Endothelial cell of umbilical vein (primary cell): ENCODE measurements at regions of chr2 and their contacts with region 1.

Region 1: DNA sequence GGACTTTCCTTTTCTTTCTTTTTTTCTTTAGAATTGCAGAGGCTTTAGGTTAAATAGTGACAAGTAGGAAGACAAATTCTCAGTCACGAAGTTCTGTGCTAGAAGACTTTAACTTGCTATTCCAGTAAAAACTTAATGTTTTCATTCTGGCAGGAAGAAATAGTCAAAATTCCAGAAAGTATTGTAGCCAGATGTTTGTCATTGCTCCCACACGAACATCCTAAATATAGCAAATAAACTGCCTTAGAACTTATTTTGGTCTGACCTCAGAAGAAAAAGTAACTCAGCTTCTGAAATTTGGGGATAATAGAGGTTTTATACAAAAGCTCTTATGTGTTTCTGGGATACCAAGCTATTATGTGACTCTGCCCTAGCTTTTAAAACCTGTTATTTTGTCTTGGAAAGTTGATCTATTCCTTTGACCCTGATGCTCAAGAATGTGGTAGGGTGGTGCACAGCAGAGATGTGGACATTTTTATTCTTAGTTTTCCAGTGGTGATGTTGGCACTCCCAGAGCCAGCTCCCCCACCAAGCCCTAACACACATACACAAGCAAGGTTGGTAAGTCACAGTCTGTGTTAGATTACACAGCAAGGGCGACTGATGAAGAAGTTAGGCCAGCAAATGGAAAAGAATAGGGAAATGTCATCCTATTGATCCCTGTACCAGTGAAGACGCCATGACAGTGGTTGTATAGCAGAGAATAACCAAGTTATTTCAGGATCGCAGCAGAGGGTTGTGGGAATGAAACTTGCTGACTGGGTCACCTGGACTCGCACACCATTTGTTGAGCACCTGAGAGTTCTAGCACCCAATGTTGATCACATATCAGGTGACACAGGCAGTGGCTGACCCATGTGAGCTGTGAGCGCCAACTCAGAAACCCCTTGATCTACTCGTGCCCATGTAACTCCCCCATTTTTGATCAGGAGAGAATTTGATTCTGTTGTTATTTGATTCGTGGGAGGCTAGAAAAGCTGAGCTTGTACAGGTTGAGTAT is 23.7 kb downstream of the FARP2 start:
- DNase-seq: no peak
- H3K4me3 ChIP-seq: no peak overlapping the region
- H3K27ac ChIP-seq: no peak overlapping the region
- H3K4me1 ChIP-seq: peaks cover 9% of the 10 kb centered on the region
- H3K27me3 ChIP-seq: no peaks in the 10 kb centered on the region
- CTCF ChIP-seq: no peak
- POLR2A ChIP-seq: no peak

Region 2: GRCh38 chr2:240913810-240914644 is 465.8 kb before region 1 on chr2:
- CTCF ChIA-PET with region 1: no interaction called
- POLR2A ChIA-PET with region 1: no interaction called
- dilution Hi-C with region 1: no loop called
- intact Hi-C with region 1: no loop called
- DNase-seq: peak; percentile 78
- H3K4me3 ChIP-seq: no peak overlapping the region
- H3K27ac ChIP-seq: peak overlapping the region; percentile 24
- H3K4me1 ChIP-seq: peaks cover 15% of the 10 kb centered on the region
- H3K27me3 ChIP-seq: no peaks in the 10 kb centered on the region
- CTCF ChIP-seq: peak; percentile 95 to 96
- POLR2A ChIP-seq: no peak

Region 3: GRCh38 chr2:241211282-241211681 is 168.5 kb before region 1 on chr2:
- CTCF ChIA-PET with region 1: no interaction called
- POLR2A ChIA-PET with region 1: no interaction called
- dilution Hi-C with region 1: no loop called
- intact Hi-C with region 1: no loop called
- DNase-seq: no peak
- H3K4me3 ChIP-seq: no peak overlapping the region
- H3K27ac ChIP-seq: no peak overlapping the region
- H3K4me1 ChIP-seq: no peaks in the 10 kb centered on the region
- H3K27me3 ChIP-seq: no peaks in the 10 kb centered on the region
- CTCF ChIP-seq: no peak
- POLR2A ChIP-seq: no peak

Region 4: DNA sequence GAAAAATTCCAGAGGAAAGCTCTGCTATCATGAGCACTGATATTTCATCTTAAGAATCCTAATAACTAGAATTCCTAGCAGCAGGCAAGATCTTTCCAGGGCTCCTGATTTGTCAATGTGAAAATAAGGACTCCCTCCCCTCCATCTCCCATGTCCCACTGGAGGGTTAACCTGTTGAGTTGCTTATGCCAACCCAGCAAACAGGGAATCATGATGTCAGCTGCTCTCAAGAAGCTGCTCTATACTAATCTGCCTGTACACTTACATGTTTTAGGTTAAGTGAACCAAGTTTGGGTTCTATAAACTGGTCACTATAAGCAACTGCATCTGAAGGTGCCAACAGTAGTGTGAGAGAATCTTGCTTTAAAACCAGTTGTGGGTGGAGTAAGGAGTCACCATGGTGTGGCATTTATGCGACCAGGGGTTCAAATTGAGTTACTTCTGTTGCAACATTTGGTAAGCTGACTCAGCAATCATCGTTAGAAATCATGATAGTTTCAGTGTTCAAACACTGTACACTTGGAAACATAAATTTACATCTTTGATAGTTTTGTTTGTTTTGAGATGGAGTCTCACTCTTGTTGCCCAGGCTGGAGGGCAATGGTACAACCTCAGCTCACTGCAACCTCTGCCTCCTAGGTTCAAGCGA is 75.2 kb after region 1 on chr2:
- CTCF ChIA-PET with region 1: no interaction called
- POLR2A ChIA-PET with region 1: no interaction called
- dilution Hi-C with region 1: no loop called
- intact Hi-C with region 1: loop called (anchors 5 kb)
- DNase-seq: no peak
- H3K4me3 ChIP-seq: no peak overlapping the region
- H3K27ac ChIP-seq: no peak overlapping the region
- H3K4me1 ChIP-seq: no peaks in the 10 kb centered on the region
- H3K27me3 ChIP-seq: no peaks in the 10 kb centered on the region
- CTCF ChIP-seq: no peak
- POLR2A ChIP-seq: no peak

Region 5: GRCh38 chr2:241519669-241520068 is 139.9 kb after region 1 on chr2:
- CTCF ChIA-PET with region 1: no interaction called
- POLR2A ChIA-PET with region 1: no interaction called
- dilution Hi-C with region 1: no loop called
- intact Hi-C with region 1: no loop called
- DNase-seq: no peak
- H3K4me3 ChIP-seq: no peak overlapping the region
- H3K27ac ChIP-seq: no peak overlapping the region
- H3K4me1 ChIP-seq: no peaks in the 10 kb centered on the region
- H3K27me3 ChIP-seq: peaks cover 0 to 3% of the 10 kb centered on the region in 2 experiments
- CTCF ChIP-seq: no peak
- POLR2A ChIP-seq: no peak